IMR-90 (cell line): ENCODE measurements at regions of chr11 and their contacts with region 1.

Region 1: GRCh38 chr11:61947486-61948210 is 2.5 kb upstream of the BEST1 start:
- DNase-seq: peak; percentile 88
- ATAC-seq: peak; percentile 85
- H3K4me3 ChIP-seq: no peak overlapping the region
- H3K27ac ChIP-seq: no peak overlapping the region
- H3K4me1 ChIP-seq: peaks cover 8% of the 10 kb centered on the region; the same call in 1 of the 2 replicates
- H3K27me3 ChIP-seq: peaks cover 2% of the 10 kb centered on the region
- CTCF ChIP-seq: peak; percentile 98
- POLR2A ChIP-seq: 0 out of 2 replicates have a peak, but pooled peaks have one; percentile 46
- RAD21 ChIP-seq: peak; percentile 99

Region 2: GRCh38 chr11:61871158-61871597 is 76.5 kb before region 1 on chr11:
- CTCF ChIA-PET with region 1: interaction called, 6 read pairs
- POLR2A ChIA-PET with region 1: no interaction called
- dilution Hi-C with region 1: no loop called
- in situ Hi-C with region 1: no loop called
- intact Hi-C with region 1: loop called (anchors 1 kb)
- DNase-seq: peak; percentile 67
- ATAC-seq: peak; percentile 98
- H3K4me3 ChIP-seq: no peak overlapping the region
- H3K27ac ChIP-seq: no peak overlapping the region
- H3K4me1 ChIP-seq: peaks cover 2% of the 10 kb centered on the region
- H3K27me3 ChIP-seq: no peaks in the 10 kb centered on the region
- CTCF ChIP-seq: peak; percentile 96
- POLR2A ChIP-seq: no peak
- RAD21 ChIP-seq: peak; percentile 94

Region 3: DNA sequence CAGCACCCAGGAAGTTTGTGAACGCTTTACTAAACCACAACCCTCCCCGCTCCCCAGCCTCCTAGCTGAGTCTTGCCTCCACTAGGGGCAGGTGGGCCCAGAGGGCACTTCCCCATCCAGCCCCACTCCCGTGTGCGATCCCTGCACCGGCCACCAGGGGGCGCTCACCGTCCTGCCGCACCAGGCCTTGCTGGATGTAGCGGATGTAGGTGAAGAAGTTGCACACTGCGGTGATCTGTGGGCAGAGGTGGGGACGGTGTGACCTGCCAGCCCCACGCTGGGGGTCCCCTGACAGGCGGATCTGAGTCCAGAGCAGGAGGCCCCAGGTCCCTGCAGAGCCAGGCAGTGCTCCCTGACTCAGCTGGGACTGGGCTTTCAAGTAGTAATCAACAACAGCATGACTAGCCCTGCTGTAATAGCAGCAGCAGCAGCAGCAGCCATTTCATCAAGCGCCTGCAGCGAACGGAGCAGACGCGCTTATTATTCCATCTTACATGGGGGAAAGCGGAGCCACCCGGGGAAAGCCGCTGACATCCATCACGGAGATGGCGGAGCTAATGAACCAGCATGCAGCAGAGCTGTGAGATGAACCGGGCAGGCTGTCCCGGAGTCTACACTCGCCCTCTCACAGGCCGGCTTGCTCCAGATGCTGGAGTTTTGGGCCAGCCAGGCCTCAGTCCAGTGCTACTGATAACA is 48.4 kb before region 1 on chr11:
- CTCF ChIA-PET with region 1: interaction called, 52 read pairs
- POLR2A ChIA-PET with region 1: no interaction called
- dilution Hi-C with region 1: no loop called
- in situ Hi-C with region 1: loop called (anchors 5 kb)
- intact Hi-C with region 1: loop called (anchors 1 kb)
- DNase-seq: peak; percentile 54
- ATAC-seq: peak; percentile 89
- H3K4me3 ChIP-seq: no peak overlapping the region
- H3K27ac ChIP-seq: no peak overlapping the region
- H3K4me1 ChIP-seq: no peaks in the 10 kb centered on the region
- H3K27me3 ChIP-seq: no peaks in the 10 kb centered on the region
- CTCF ChIP-seq: peak; percentile 98
- POLR2A ChIP-seq: no peak
- RAD21 ChIP-seq: peak; percentile 86

Region 4: DNA sequence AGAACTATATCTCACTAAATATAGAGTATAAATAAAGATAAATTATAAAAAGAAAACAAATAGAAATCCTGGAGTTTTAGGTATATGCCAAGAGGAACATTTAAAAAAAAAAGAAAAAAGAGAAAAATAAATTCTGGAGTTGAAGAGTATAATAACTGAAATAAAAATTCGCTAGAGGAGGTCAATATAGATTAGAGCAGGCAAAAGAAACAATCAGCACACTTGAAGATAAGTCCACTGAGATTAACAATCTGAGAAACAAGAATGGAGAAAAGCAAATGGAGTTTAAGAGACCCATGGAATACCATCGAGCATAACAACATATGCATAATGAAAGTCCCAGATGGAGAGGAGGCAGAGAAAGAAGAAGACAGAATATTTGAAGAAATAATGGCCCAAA is 11.8 kb before region 1 on chr11:
- CTCF ChIA-PET with region 1: interaction called, 6 read pairs
- POLR2A ChIA-PET with region 1: no interaction called
- dilution Hi-C with region 1: no loop called
- in situ Hi-C with region 1: no loop called
- intact Hi-C with region 1: loop called (anchors 1 kb)
- DNase-seq: no peak
- ATAC-seq: no peak
- H3K4me3 ChIP-seq: no peak overlapping the region
- H3K27ac ChIP-seq: no peak overlapping the region
- H3K4me1 ChIP-seq: no peaks in the 10 kb centered on the region
- H3K27me3 ChIP-seq: peaks cover 10% of the 10 kb centered on the region
- CTCF ChIP-seq: no peak
- POLR2A ChIP-seq: no peak
- RAD21 ChIP-seq: no peak

Region 5: GRCh38 chr11:61999141-61999975 is 51.7 kb after region 1 on chr11:
- CTCF ChIA-PET with region 1: no interaction called
- POLR2A ChIA-PET with region 1: no interaction called
- dilution Hi-C with region 1: no loop called
- in situ Hi-C with region 1: no loop called
- intact Hi-C with region 1: no loop called
- DNase-seq: no peak
- ATAC-seq: no peak
- H3K4me3 ChIP-seq: no peak overlapping the region
- H3K27ac ChIP-seq: no peak overlapping the region
- H3K4me1 ChIP-seq: no peaks in the 10 kb centered on the region
- H3K27me3 ChIP-seq: no peaks in the 10 kb centered on the region
- CTCF ChIP-seq: no peak
- POLR2A ChIP-seq: no peak
- RAD21 ChIP-seq: no peak

Region 6: GRCh38 chr11:62069986-62070919 is 122.6 kb after region 1 on chr11:
- CTCF ChIA-PET with region 1: no interaction called
- POLR2A ChIA-PET with region 1: no interaction called
- dilution Hi-C with region 1: no loop called
- in situ Hi-C with region 1: loop called (anchors 10 kb)
- intact Hi-C with region 1: no loop called
- DNase-seq: no peak
- ATAC-seq: peak; percentile 40; the same call in 1 of the 2 replicates
- H3K4me3 ChIP-seq: no peak overlapping the region
- H3K27ac ChIP-seq: no peak overlapping the region
- H3K4me1 ChIP-seq: no peaks in the 10 kb centered on the region
- H3K27me3 ChIP-seq: peaks cover 8% of the 10 kb centered on the region
- CTCF ChIP-seq: no peak
- POLR2A ChIP-seq: no peak
- RAD21 ChIP-seq: no peak

Region 7: DNA sequence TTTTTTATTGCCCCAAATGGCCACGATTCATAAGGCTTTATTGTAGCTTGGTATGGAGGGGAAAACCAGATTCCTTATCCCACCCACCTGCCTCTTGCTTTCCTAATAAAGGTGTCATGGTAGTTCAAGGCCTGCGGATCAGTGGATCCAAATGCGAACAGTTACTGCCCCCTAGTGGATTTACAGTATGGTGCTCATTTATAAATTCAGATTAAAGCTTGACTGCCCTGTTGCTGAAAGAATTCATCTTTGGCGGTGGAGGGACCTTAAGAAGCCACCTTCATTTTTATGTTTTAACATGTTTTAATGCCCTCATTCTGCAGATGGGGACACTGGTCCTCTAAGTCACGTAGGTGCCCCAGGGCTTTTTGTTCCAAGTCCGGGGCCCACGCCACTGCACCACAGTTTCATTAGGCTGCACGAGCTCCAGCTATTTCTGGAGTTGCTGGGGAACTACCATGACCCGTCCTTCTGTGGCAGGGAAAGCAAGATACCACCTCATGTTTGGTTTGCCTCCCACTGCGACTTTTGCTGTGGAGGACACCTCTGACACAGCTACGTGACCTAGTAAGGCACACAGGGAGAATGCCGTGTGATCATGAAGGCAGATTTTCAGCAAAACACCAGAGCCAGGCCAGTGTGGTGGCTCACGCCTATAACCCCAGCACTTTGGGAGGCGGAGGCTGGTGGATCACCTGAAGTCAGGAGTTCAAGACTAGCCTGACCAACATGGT is 160.5 kb after region 1 on chr11:
- CTCF ChIA-PET with region 1: interaction called, 5 read pairs
- POLR2A ChIA-PET with region 1: no interaction called
- dilution Hi-C with region 1: no loop called
- in situ Hi-C with region 1: no loop called
- intact Hi-C with region 1: loop called (anchors 1 kb)
- DNase-seq: peak; percentile 74
- ATAC-seq: peak; percentile 30
- H3K4me3 ChIP-seq: no peak overlapping the region
- H3K27ac ChIP-seq: no peak overlapping the region
- H3K4me1 ChIP-seq: peaks cover 12% of the 10 kb centered on the region
- H3K27me3 ChIP-seq: no peaks in the 10 kb centered on the region
- CTCF ChIP-seq: peak; percentile 91
- POLR2A ChIP-seq: no peak
- RAD21 ChIP-seq: peak; percentile 87

Region 8: GRCh38 chr11:62337303-62338181 is 389.9 kb after region 1 on chr11 and contains the start of gene ASRGL1:
- CTCF ChIA-PET with region 1: no interaction called
- POLR2A ChIA-PET with region 1: no interaction called
- dilution Hi-C with region 1: no loop called
- in situ Hi-C with region 1: no loop called
- intact Hi-C with region 1: no loop called
- DNase-seq: peak; percentile 15
- ATAC-seq: peak; percentile 91
- H3K4me3 ChIP-seq: peak within 1 kb of the TSS; percentile 51
- H3K27ac ChIP-seq: no peak within 1 kb of the TSS
- H3K4me1 ChIP-seq: no peaks in the 10 kb centered on the region
- H3K27me3 ChIP-seq: peaks cover 48% of the 10 kb centered on the region
- CTCF ChIP-seq: no peak
- POLR2A ChIP-seq: no peak
- RAD21 ChIP-seq: no peak
- total RNA-seq, gene ASRGL1: 0.28 TPM in 1 of 2 replicates, not detected in the other